ENCODE measurements at regions of chr3 and their contacts with region 1.

Region 1: GRCh38 chr3:70889162-70890019 is 577.0 kb upstream of the MDFIC2 start:
- DNase-seq: peak; percentile 15
- ATAC-seq: peak; percentile 35; the same call in 1 of the 2 replicates
- H3K4me3 ChIP-seq: no peak overlapping the region
- H3K27ac ChIP-seq: no peak overlapping the region
- H3K4me1 ChIP-seq: peaks cover 2% of the 10 kb centered on the region; the same call in 1 of the 2 replicates
- H3K27me3 ChIP-seq: no peaks in the 10 kb centered on the region
- CTCF ChIP-seq: no peak
- POLR2A ChIP-seq: no peak
- RAD21 ChIP-seq: no peak

Region 2: GRCh38 chr3:70861855-70862254 is 27.5 kb before region 1 on chr3:
- CTCF ChIA-PET with region 1: no interaction called
- POLR2A ChIA-PET with region 1: no interaction called
- dilution Hi-C with region 1: no loop called
- in situ Hi-C with region 1: no loop called
- intact Hi-C with region 1: loop called (anchors 1 kb)
- DNase-seq: peak; percentile 91
- ATAC-seq: peak; percentile 79
- H3K4me3 ChIP-seq: no peak overlapping the region
- H3K27ac ChIP-seq: no peak overlapping the region
- H3K4me1 ChIP-seq: peaks cover 8% of the 10 kb centered on the region
- H3K27me3 ChIP-seq: no peaks in the 10 kb centered on the region
- CTCF ChIP-seq: no peak
- POLR2A ChIP-seq: peak; percentile 57; the same call in 1 of the 2 replicates
- RAD21 ChIP-seq: no peak

Measured in IMR-90 (cell line).